Cardiac septum (tissue), 1 donor: ENCODE measurements at regions of chr2 and their contacts with region 1.

Region 1: DNA sequence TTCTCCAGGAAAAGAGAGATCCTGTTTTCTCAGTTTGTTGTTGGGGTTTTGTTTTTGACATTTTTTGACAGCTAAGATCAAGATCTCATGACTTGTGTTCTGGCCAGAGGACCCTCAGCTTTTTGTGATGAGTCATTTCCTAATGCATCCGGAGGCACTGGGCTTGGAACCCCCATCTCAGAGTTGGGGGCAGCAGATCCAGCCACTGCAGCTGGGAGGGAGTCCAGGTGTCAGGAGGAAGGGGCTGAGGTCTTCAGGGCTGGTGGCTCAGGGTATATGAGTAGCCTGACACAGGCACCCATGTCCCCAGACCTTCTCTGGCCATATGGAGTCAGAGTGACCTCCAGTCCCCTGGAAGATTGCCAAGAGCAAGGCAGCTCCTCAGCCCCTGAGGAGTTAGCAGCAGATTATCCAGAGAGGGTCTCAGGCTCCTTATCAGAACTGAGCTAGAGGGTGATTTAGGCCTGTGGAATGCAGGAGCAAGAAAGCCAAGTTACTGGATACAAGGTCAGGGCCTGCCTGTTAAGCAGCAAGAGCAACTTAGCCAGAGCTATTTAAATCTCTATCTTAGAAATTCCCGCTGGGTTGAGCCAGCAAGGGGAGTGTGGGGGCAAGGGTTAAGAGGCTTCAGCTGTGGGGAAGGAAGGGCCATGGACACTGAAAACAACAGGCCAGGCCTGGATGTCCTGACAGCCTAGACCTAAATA is 62.4 kb downstream of the TANC1 start:
- DNase-seq: peak; percentile 78

Region 2: GRCh38 chr2:158903711-158904443 is 127.0 kb before region 1 on chr2:
- intact Hi-C with region 1: loop called (anchors 5 kb)
- DNase-seq: no peak